ENCODE measurements at regions of chr7 and their contacts with region 1.

Region 1: DNA sequence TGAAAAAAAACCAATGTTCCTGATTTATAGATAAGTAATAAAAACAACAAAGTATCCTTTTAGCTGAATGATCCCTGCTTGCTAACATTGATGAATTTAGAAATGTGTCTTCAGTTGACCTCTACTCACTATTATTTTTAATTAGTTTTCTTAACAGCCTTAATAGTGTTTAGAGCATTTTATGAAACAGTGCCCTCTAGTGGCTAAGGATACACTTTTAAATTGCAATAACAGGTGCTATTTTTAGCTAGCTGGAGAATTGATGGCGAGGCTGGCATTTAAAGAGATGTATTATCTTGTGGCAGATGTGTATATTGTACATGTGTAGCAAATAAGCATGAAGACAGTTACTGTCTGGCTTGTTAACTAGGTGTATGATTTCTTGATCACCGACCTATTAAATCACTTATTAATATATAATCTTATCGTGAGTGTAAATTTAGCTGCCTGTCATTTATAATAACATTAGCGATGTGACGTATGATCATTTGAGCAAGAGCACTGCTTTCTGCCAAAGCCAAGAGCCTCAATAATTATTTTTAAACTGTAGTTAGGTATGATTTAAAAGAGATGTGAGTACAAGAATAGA is 451.9 kb downstream of the DPP6 start:
- DNase-seq: peak; percentile 47
- H3K4me3 ChIP-seq: no peak overlapping the region; a peak in 1 of 4 replicates
- H3K27ac ChIP-seq: no peak overlapping the region
- H3K4me1 ChIP-seq: no peaks in the 10 kb centered on the region
- H3K27me3 ChIP-seq: no peaks in the 10 kb centered on the region
- CTCF ChIP-seq: peak; percentile 78
- EP300 ChIP-seq: no peak
- RAD21 ChIP-seq: peak; percentile 82

Region 2: GRCh38 chr7:154469652-154470051 is 34.4 kb before region 1 on chr7:
- CTCF ChIA-PET with region 1: interaction called, 10 read pairs
- POLR2A ChIA-PET with region 1: no interaction called
- DNase-seq: no peak
- H3K4me3 ChIP-seq: no peak overlapping the region
- H3K27ac ChIP-seq: no peak overlapping the region
- H3K4me1 ChIP-seq: no peaks in the 10 kb centered on the region
- H3K27me3 ChIP-seq: no peaks in the 10 kb centered on the region
- CTCF ChIP-seq: no peak
- EP300 ChIP-seq: no peak
- RAD21 ChIP-seq: no peak

Region 3: DNA sequence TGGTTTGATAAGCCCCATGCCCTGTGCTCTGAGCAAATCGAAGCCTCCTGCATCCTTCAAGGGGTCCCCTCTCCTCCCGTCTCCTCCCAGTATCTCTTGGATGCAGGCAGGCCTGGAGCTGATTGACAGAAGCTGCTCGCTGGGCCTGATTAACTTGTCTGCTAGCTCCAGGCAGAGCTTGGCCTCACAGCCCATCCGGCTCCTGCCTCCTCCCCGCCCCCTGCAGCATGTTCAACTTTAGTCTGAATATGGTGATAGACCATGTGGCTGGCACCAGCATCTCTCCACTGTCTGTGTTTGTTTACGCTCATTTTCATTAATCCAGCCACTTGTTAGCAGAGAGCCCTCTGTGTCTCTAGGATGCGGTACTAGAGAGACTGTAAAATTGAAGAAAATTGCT is 19.6 kb before region 1 on chr7:
- CTCF ChIA-PET with region 1: interaction called, 40 read pairs
- POLR2A ChIA-PET with region 1: no interaction called
- DNase-seq: peak; percentile 82
- H3K4me3 ChIP-seq: no peak overlapping the region
- H3K27ac ChIP-seq: peak overlapping the region in 1 of 2 experiments; percentile 64; a peak in 1 of 4 replicates
- H3K4me1 ChIP-seq: peaks cover 0 to 10% of the 10 kb centered on the region in 2 experiments; a peak in 2 of 4 replicates
- H3K27me3 ChIP-seq: no peaks in the 10 kb centered on the region
- CTCF ChIP-seq: no peak
- EP300 ChIP-seq: no peak
- RAD21 ChIP-seq: no peak; the same call in 1 of the 2 replicates

Region 4: DNA sequence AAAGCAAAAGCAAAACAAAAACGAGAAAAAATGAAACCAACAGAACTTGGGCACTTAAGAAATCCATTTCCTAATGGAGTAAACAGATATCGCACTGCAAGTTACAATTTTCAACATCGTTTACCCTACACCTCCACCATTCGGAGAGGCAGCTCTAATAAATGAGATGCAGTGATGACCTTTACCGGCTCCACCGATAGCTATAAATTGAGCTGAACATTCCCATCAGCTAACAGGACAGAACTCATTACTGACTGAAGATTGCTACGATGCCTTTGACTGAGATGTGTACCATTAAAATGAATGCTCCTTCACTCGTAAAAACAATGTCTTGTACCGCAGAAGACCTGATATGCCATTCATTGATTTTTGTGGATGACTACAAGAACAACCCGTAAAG is 13.7 kb after region 1 on chr7:
- CTCF ChIA-PET with region 1: interaction called, 29 read pairs
- POLR2A ChIA-PET with region 1: no interaction called
- DNase-seq: no peak
- H3K4me3 ChIP-seq: no peak overlapping the region
- H3K27ac ChIP-seq: no peak overlapping the region
- H3K4me1 ChIP-seq: peaks cover 0 to 10% of the 10 kb centered on the region in 2 experiments; a peak in 2 of 4 replicates
- H3K27me3 ChIP-seq: no peaks in the 10 kb centered on the region
- CTCF ChIP-seq: no peak
- EP300 ChIP-seq: no peak
- RAD21 ChIP-seq: no peak

Region 5: GRCh38 chr7:154652564-154652963 is 148.5 kb after region 1 on chr7:
- CTCF ChIA-PET with region 1: no interaction called
- POLR2A ChIA-PET with region 1: no interaction called
- DNase-seq: no peak
- H3K4me3 ChIP-seq: no peak overlapping the region; a peak in 1 of 4 replicates
- H3K27ac ChIP-seq: no peak overlapping the region
- H3K4me1 ChIP-seq: no peaks in the 10 kb centered on the region
- H3K27me3 ChIP-seq: no peaks in the 10 kb centered on the region
- CTCF ChIP-seq: no peak
- EP300 ChIP-seq: no peak
- RAD21 ChIP-seq: no peak

Region 6: DNA sequence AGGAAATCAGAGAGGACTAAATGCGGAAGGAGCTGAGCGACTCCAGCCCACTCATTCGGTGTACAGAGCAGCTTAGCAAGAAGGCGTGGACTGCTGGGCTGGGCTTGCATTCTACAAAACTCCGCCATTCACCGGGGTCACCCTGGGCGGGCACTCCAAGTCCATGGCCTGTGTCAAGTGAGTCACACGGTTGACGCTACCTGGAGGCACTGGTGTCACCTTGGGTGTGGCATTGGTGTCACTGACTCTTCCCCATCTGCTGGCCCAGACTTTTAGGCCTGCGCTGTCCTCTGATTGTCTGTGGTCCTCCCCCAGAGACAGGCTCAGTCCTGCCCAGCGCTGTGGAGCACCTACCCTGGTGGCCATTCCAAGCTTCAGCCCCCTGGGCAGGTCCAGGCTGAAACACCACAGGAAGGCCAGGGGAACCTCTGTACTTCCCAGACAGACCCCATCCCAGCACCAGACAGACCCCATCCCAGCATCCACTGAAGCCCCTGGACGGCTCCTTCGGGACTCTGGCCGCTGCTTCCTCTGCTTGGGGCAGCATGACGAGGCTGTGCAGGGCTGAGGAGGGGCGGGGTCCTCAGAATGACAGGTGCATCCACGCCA is 1072.9 kb after region 1 on chr7:
- CTCF ChIA-PET with region 1: no interaction called
- POLR2A ChIA-PET with region 1: no interaction called
- DNase-seq: no peak
- H3K4me3 ChIP-seq: no peak overlapping the region
- H3K27ac ChIP-seq: no peak overlapping the region
- H3K4me1 ChIP-seq: no peaks in the 10 kb centered on the region
- H3K27me3 ChIP-seq: peaks cover 30% of the 10 kb centered on the region; the same call in 1 of the 2 replicates
- CTCF ChIP-seq: no peak
- EP300 ChIP-seq: no peak
- RAD21 ChIP-seq: no peak

Measured in SK-N-SH (cell line).